Aorta (tissue), 5 donors: ENCODE measurements at regions of chr6 and their contacts with region 1.

Region 1: DNA sequence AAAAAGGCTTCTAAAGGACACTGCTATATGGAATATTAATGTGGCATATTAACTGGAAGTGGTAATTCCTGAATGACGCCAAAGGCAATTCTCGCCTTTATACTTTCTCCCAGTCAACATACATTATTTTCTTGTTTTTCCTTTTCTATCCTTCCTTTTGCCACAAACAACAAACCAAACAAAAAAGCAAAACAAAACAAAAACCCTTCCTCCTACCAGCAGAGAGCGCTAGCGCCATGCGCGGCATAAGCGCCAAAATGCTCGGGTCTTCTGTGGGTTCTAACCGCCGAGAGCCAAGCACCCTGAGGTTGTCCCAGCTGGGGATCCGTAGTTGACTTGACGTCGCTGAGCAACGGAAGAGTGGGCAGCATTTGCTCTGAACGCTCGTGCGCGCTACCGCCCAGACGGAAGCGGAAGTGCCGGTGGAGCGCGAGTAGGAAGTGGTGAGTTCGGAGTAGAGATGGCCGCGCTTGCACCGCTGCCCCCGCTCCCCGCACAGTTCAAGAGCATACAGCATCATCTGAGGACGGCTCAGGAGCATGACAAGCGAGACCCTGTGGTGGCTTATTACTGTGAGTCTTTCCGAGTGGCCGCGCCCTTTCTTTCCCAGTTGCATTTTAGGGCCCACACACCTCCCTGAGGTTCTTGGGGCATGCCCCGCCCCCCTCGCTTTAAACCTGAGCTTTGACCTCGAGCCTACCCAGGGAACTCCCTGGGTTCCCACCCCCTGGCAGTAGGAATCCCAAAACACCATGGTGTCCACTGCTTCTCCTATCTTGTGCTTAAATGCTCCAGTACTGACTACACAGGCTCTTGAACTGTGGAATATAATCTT is at the starts of genes NMBR and VTA1:
- DNase-seq: peak; percentile 98 to 99
- ATAC-seq: peak; percentile 100
- H3K4me3 ChIP-seq: peak within 1 kb of the TSS; percentile 31 to 90
- H3K27ac ChIP-seq: peak within 1 kb of the TSS in 1 of 2 donors; percentile 43
- H3K4me1 ChIP-seq: peaks cover 0 to 8% of the 10 kb centered on the region in 2 donors
- H3K27me3 ChIP-seq: no peaks in the 10 kb centered on the region
- total RNA-seq, gene NMBR: 0.45 TPM in 1 of 2 donors, not detected in the other
- total RNA-seq, gene VTA1: 26.7 to 29.9 TPM

Region 2: GRCh38 chr6:142207265-142207877 is 60.3 kb after region 1 on chr6:
- intact Hi-C with region 1: loop called (anchors 5 kb)
- DNase-seq: peak; percentile 50 to 55
- ATAC-seq: peak; percentile 77
- H3K4me3 ChIP-seq: no peak overlapping the region
- H3K27ac ChIP-seq: no peak overlapping the region
- H3K4me1 ChIP-seq: peaks cover 0 to 4% of the 10 kb centered on the region in 2 donors
- H3K27me3 ChIP-seq: no peaks in the 10 kb centered on the region

Region 3: GRCh38 chr6:142246960-142247359 is 99.9 kb after region 1 on chr6:
- intact Hi-C with region 1: no loop called
- DNase-seq: no peak
- ATAC-seq: no peak
- H3K4me3 ChIP-seq: no peak overlapping the region
- H3K27ac ChIP-seq: no peak overlapping the region
- H3K4me1 ChIP-seq: no peaks in the 10 kb centered on the region
- H3K27me3 ChIP-seq: no peaks in the 10 kb centered on the region

Region 4: GRCh38 chr6:142387997-142388815 is 241.2 kb after region 1 on chr6:
- intact Hi-C with region 1: loop called (anchors 1 to 5 kb)
- DNase-seq: no peak
- ATAC-seq: no peak
- H3K4me3 ChIP-seq: no peak overlapping the region
- H3K27ac ChIP-seq: no peak overlapping the region
- H3K4me1 ChIP-seq: no peaks in the 10 kb centered on the region
- H3K27me3 ChIP-seq: no peaks in the 10 kb centered on the region

Region 5: GRCh38 chr6:142566628-142567396 is 419.8 kb after region 1 on chr6:
- intact Hi-C with region 1: loop called in 1 of 2 experiments (anchors 5 kb)
- DNase-seq: no peak
- ATAC-seq: peak; percentile 82
- H3K4me3 ChIP-seq: no peak overlapping the region
- H3K27ac ChIP-seq: no peak overlapping the region
- H3K4me1 ChIP-seq: peaks cover 0 to 4% of the 10 kb centered on the region in 2 donors
- H3K27me3 ChIP-seq: no peaks in the 10 kb centered on the region